ENCODE measurements at regions of chr6 and their contacts with region 1.

Region 1: DNA sequence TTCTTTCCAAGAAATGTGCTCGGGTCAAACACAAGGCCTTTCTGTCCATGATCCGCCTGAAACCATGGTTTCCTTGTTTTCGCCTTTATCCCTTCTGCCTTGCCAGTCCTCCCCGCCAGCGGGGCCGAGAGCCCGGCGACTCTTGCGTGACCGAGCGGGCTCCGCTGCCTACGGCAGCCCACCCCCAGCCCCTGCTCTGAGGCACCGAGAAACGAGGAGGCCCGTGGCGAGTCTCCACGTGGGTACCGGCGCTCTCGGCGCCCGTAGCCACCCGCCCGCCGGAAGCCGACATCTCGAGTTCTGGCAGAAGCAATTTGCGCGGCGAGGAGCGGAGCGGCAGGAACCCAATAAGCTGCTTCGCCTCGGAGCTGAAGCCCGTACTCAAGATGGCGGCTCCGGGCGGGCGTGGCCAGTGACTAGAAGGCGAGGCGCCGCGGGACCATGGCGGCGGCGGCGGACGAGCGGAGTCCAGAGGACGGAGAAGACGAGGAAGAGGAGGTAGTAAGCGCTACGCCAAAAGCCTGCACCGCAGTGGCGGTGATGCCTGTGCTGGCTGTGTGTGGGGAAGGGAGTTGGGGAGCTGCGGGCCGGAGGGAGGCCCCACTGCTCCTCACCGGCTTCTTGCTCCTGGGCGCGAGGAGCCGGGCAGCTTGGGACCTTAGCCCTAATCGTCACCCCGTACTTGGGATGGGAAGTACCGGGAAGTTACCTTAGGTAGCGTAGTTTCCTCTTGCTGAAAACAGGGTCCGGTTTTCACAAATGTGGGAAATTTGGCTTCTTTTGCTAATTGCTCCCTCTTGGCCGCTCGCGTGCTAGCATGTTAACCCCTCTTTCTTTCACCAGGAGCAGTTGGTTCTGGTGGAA is at the start of gene GTF3C6:
- DNase-seq: peak; percentile 61
- ATAC-seq: peak; percentile 99
- H3K4me3 ChIP-seq: peak within 1 kb of the TSS; percentile 98
- H3K27ac ChIP-seq: peak within 1 kb of the TSS; percentile 96
- H3K4me1 ChIP-seq: peaks cover 7% of the 10 kb centered on the region
- H3K27me3 ChIP-seq: no peaks in the 10 kb centered on the region
- CTCF ChIP-seq: no peak
- EP300 ChIP-seq: no peak
- POLR2A ChIP-seq: peak; percentile 100
- RAD21 ChIP-seq: no peak
- polyA plus RNA-seq, gene GTF3C6: 122 to 154 TPM

Region 2: DNA sequence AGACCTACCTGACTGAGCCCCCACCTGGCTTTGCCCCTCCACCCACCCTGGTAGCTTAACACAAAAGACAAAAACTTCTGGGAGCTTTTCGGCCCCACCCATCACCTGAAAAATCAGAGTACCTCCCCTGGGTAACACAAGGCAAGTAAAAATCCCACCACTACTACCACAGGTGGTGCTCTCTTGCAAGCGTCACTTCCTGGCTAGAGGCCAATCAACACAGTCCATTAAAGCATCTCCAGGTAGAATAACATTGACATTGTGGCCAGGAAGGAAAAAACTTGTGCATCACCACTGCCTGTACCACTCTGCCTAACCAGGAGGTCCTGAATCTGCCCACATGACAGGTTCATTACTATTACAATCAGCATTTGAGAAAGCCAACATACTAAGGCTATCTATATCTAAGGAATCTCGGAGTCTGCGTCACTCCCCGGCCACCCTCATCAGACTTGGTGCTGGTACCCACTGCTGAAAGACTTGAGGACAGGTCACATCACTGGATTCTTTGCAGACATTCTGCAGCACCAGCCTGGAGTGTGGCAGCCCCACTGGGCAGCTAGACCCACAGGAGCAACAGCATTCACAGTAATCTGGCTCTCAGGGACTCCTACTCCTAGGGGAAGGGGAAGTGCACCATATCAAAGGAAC is 269.2 kb before region 1 on chr6:
- CTCF ChIA-PET with region 1: no interaction called
- POLR2A ChIA-PET with region 1: no interaction called
- RAD21 ChIA-PET with region 1: no interaction called
- SMC1A ChIA-PET with region 1: no interaction called
- in situ Hi-C with region 1: no loop called
- intact Hi-C with region 1: no loop called
- DNase-seq: no peak
- ATAC-seq: peak; percentile 20; the same call in 2 of the 3 replicates
- H3K4me3 ChIP-seq: no peak overlapping the region
- H3K27ac ChIP-seq: no peak overlapping the region
- H3K4me1 ChIP-seq: no peaks in the 10 kb centered on the region
- H3K27me3 ChIP-seq: no peaks in the 10 kb centered on the region
- CTCF ChIP-seq: no peak
- EP300 ChIP-seq: no peak
- POLR2A ChIP-seq: no peak
- RAD21 ChIP-seq: no peak

Region 3: GRCh38 chr6:110938171-110938570 is 20.4 kb before region 1 on chr6:
- CTCF ChIA-PET with region 1: no interaction called
- POLR2A ChIA-PET with region 1: no interaction called
- RAD21 ChIA-PET with region 1: no interaction called
- SMC1A ChIA-PET with region 1: no interaction called
- in situ Hi-C with region 1: no loop called
- intact Hi-C with region 1: no loop called
- DNase-seq: no peak
- ATAC-seq: no peak
- H3K4me3 ChIP-seq: no peak overlapping the region
- H3K27ac ChIP-seq: no peak overlapping the region
- H3K4me1 ChIP-seq: no peaks in the 10 kb centered on the region
- H3K27me3 ChIP-seq: no peaks in the 10 kb centered on the region
- CTCF ChIP-seq: no peak
- EP300 ChIP-seq: no peak
- POLR2A ChIP-seq: no peak
- RAD21 ChIP-seq: no peak

Region 4: DNA sequence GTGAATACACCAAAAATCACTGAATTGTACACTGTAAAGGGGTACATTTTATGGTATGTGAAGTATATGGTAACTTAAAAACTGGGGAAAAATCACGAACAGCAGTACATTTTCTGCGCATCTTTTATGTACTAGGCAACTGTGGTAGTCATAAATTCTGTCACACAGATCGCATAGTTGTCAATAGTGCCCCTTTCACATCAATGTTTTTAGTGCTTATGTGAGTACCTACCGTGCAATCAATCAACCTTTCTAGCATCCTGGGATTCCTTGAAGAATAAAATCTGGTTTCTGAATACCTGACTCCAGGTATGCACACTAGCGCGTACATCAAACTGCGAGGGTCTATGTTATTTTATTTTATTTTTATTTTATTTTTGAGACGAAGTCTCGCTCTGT is 22.6 kb after region 1 on chr6:
- CTCF ChIA-PET with region 1: interaction called, 13 read pairs
- POLR2A ChIA-PET with region 1: interaction called, 16 read pairs
- RAD21 ChIA-PET with region 1: interaction called, 8 read pairs
- SMC1A ChIA-PET with region 1: interaction called, 8 read pairs
- in situ Hi-C with region 1: no loop called
- intact Hi-C with region 1: no loop called
- DNase-seq: no peak
- ATAC-seq: peak; percentile 16; the same call in 2 of the 3 replicates
- H3K4me3 ChIP-seq: peak overlapping the region; percentile 84
- H3K27ac ChIP-seq: peak overlapping the region; percentile 82
- H3K4me1 ChIP-seq: no peaks in the 10 kb centered on the region
- H3K27me3 ChIP-seq: no peaks in the 10 kb centered on the region
- CTCF ChIP-seq: no peak
- EP300 ChIP-seq: no peak
- POLR2A ChIP-seq: no peak
- RAD21 ChIP-seq: no peak